Mucosa of descending colon (tissue), 3 donors: ENCODE measurements at regions of chr3 and their contacts with region 1.

Region 1: DNA sequence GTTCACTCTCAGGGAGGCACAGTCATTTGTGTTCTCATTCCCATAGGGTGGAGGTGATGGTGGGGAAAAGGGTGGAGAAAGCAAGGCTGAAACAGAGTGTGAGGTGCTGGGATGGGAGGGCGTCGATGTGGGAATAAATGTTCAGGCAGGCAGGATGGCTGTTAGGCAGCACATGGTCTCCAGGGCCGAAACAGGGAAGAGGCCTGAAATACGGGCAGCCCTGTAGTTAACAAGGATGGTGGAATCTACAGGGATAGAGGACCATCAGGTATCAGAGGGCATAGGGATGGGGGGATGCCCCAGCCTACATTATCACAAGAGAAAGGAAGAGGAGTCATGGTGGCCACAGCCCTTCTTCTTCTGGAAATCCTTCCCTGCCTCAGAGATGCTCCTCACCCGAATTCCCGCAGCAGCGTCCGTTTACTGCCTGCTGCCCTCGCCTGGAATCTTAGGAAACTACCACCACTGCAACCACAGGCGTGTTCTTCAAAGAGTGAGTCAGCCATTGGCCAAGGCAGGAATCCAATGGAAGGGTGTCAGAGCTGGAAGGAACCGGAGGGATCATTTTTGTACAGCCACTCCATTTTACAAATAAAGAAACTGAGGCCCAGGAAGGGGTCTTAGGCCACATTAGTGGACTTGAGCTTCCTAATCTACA is 49.7 kb upstream of the POMGNT2 start:
- DNase-seq: peak in 2 of 3 donors; percentile 61 to 65
- ATAC-seq: peak; percentile 84
- H3K4me3 ChIP-seq: no peak overlapping the region
- H3K4me1 ChIP-seq: no peaks in the 10 kb centered on the region
- CTCF ChIP-seq: peak; percentile 26

Region 2: DNA sequence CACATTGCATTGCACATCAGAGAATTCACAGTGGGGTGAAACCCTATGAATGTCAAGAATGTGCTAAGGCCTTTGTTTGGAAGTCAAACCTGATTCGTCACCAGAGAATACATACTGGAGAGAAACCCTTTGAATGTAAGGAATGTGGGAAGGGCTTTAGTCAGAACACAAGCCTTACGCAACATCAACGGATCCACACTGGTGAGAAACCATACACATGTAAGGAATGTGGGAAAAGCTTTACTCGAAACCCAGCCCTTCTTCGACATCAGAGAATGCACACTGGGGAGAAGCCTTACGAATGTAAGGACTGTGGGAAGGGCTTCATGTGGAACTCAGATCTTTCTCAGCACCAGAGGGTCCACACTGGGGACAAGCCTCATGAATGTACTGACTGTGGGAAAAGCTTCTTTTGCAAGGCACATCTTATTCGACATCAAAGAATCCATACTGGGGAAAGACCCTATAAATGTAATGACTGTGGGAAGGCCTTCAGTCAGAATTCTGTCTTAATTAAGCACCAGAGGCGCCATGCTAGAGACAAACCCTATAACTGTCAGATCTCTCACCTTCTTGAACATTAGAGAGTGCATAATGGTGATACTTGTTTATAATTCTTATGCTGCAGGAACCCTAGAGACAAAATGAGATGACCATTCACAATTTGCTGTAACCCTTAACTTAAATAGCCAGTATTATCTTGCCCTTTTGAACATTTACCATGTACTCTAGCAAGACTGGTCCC is 240.7 kb before region 1 on chr3:
- intact Hi-C with region 1: no loop called
- DNase-seq: no peak
- ATAC-seq: no peak
- H3K4me3 ChIP-seq: no peak overlapping the region
- H3K4me1 ChIP-seq: no peaks in the 10 kb centered on the region
- CTCF ChIP-seq: no peak

Region 3: DNA sequence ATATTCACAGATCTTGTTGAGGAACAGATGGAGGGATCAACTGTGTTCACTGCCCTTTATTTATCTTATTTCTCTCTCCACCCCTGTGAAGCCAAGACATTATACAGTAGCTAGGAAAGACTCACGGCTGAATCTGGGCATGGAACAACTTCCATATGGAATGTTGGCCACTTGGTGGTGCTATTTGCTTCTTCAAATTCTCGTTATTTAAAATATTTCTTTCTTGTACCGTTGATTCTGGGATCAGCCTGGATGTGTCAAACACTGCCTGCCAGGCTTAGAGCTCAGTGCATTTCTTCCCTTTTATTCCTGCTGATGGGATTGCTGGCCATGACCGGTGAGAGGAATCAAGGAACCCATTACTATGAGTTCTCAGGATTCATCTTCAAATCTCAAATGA is 194.0 kb before region 1 on chr3:
- intact Hi-C with region 1: loop called (anchors 2 to 5 kb)
- DNase-seq: peak in 1 of 3 donors; percentile 72
- ATAC-seq: peak; percentile 65
- H3K4me3 ChIP-seq: no peak overlapping the region
- H3K4me1 ChIP-seq: no peaks in the 10 kb centered on the region
- CTCF ChIP-seq: peak; percentile 27

Region 4: GRCh38 chr3:43055806-43056770 is 99.5 kb before region 1 on chr3:
- intact Hi-C with region 1: no loop called
- DNase-seq: no peak
- ATAC-seq: no peak
- H3K4me3 ChIP-seq: no peak overlapping the region
- H3K4me1 ChIP-seq: no peaks in the 10 kb centered on the region
- CTCF ChIP-seq: no peak

Region 5: GRCh38 chr3:43389388-43390254 is 234.0 kb after region 1 on chr3:
- intact Hi-C with region 1: no loop called
- DNase-seq: peak in 2 of 3 donors; percentile 46 to 68
- ATAC-seq: peak; percentile 89
- H3K4me3 ChIP-seq: no peak overlapping the region
- H3K4me1 ChIP-seq: no peaks in the 10 kb centered on the region
- CTCF ChIP-seq: no peak

Region 6: DNA sequence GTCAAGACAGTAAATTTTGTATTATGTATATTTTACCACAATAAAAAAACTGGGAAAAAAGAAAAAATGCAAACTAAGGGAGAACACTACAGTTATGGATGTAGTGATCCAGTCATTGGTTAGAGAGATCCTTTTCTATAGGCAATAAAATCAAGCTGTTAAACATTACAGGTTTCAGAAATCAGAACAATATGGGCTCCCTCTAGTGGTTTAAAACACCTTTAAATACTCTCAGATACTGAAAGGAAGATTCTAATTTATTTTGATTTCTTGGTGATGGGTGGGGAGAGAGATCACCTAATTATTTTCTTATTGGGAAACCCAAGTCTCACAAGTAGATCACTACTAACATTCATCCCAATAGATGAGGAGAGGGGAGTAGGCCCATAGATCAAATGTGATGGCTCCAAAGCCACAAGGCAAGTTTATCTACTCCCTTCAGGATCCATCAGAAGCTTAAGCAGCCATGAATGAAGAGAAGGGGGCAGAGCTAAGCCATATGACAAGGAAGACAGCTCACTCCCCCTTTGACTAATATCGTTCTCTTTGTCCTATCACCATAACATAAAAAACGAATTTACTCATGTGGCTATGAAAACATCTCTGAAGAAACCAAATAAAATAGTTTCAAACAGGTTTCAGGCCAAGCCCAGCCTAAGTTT is 347.6 kb after region 1 on chr3:
- intact Hi-C with region 1: loop called (anchors 10 kb)
- DNase-seq: no peak
- ATAC-seq: peak; percentile 72
- H3K4me3 ChIP-seq: no peak overlapping the region
- H3K4me1 ChIP-seq: no peaks in the 10 kb centered on the region
- CTCF ChIP-seq: peak; percentile 10